Breast epithelium (tissue), 4 donors: ENCODE measurements at regions of chr2 and their contacts with region 1.

Region 1: DNA sequence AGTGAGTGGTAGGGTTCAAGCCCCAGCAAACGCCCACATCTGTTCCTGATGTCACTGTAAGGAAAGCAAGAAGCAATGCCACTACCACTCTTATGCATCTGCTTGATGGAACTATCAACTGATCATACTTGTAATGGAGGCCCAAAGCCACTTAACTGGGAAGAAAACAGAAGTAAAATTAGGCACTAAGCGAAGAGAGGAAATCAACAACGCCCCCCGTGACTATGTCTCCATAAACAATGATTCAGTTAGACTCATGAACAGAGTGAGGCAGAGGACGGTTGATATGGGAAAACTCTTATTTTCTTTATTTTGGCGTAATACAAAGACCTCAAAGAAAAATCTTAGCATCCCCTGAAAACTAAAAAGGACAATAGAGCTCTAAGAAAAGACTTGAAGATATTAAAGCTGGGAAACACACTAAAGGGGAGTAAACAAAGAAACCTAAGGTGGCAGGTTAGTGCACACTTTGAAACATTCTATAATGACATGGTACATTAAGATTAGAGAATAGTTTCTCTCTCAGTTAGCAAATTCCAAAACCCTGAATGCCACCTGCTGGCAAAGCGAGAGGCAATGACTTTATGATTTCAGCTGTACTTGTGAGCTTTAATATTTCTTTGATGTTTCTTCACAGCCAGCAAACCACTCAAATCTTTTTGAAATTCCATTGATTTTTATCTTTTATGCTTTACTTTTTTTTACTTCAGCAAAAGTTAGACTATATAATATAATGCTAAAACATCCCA is 86.5 kb downstream of the LRP2 start:
- DNase-seq: no peak
- H3K4me3 ChIP-seq: no peak overlapping the region
- H3K27ac ChIP-seq: no peak overlapping the region
- H3K4me1 ChIP-seq: no peaks in the 10 kb centered on the region
- H3K27me3 ChIP-seq: no peaks in the 10 kb centered on the region
- CTCF ChIP-seq: peak in 1 of 3 donors; percentile 15
- POLR2A ChIP-seq: no peak

Region 2: GRCh38 chr2:168583064-168583709 is 692.7 kb before region 1 on chr2:
- intact Hi-C with region 1: no loop called
- DNase-seq: no peak
- H3K4me3 ChIP-seq: no peak overlapping the region
- H3K27ac ChIP-seq: peak overlapping the region; percentile 6 to 20
- H3K4me1 ChIP-seq: peaks cover 0 to 5% of the 10 kb centered on the region in 2 donors
- H3K27me3 ChIP-seq: no peaks in the 10 kb centered on the region
- CTCF ChIP-seq: no peak
- POLR2A ChIP-seq: no peak

Region 3: GRCh38 chr2:169265591-169265990 is 10.3 kb before region 1 on chr2:
- intact Hi-C with region 1: loop called (anchors 1 kb)
- DNase-seq: no peak
- H3K4me3 ChIP-seq: no peak overlapping the region
- H3K27ac ChIP-seq: no peak overlapping the region
- H3K4me1 ChIP-seq: no peaks in the 10 kb centered on the region
- H3K27me3 ChIP-seq: no peaks in the 10 kb centered on the region
- CTCF ChIP-seq: no peak
- POLR2A ChIP-seq: no peak